ENCODE measurements at regions of chr9 and their contacts with region 1.

Region 1: DNA sequence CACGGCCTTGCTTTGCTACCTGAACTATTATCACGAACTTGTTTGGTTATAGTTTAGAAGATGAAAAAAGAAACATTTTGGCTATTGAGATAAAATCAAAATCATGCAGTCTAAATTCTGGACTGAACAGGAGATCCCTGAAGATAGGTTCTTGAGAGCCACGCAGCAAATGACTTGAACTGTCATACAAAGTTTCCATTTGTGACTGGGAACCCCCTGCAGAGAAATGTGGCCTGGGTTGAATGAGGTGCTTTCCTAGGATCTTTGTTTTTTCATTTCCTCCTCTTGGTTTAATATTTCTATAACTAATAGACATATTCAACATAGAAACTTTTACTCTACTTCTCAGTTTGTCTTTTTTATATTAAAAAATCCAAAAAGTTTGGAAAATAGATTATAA is 184.7 kb upstream of the TRPM3 start:
- DNase-seq: no peak
- ATAC-seq: no peak
- H3K4me3 Mint-ChIP-seq: no peak overlapping the region
- H3K27ac Mint-ChIP-seq: no peak overlapping the region
- H3K4me1 Mint-ChIP-seq: no peaks in the 10 kb centered on the region
- H3K27me3 Mint-ChIP-seq: peaks cover 4% of the 10 kb centered on the region

Region 2: GRCh38 chr9:71128796-71129195 is 177.3 kb before region 1 on chr9:
- CTCF ChIA-PET with region 1: no interaction called
- POLR2A ChIA-PET with region 1: no interaction called
- intact Hi-C with region 1: no loop called
- DNase-seq: no peak
- ATAC-seq: no peak
- H3K4me3 Mint-ChIP-seq: no peak overlapping the region
- H3K27ac Mint-ChIP-seq: no peak overlapping the region
- H3K4me1 Mint-ChIP-seq: no peaks in the 10 kb centered on the region
- H3K27me3 Mint-ChIP-seq: peaks cover under 1% of the 10 kb centered on the region

Region 3: DNA sequence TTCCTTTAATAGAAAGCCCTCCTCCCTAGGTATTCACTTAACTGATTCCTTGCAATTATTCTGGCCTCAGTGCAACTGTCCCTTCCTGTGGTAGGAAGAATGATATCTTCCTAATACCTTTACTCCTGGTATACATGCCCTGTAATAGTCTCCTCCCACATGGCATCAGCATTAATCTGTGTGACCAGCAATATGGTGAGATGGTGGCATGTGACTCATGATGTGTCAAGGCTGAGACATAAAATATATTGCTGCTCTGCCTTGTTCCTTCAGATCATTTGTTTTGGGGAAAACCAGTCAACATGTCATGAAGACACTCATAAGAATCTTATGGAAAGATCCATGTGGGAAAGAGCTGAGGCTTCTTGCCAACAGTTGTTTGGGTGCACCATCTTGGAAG is 35.6 kb before region 1 on chr9:
- CTCF ChIA-PET with region 1: no interaction called
- POLR2A ChIA-PET with region 1: no interaction called
- intact Hi-C with region 1: no loop called
- DNase-seq: no peak
- ATAC-seq: no peak
- H3K4me3 Mint-ChIP-seq: no peak overlapping the region
- H3K27ac Mint-ChIP-seq: no peak overlapping the region
- H3K4me1 Mint-ChIP-seq: no peaks in the 10 kb centered on the region
- H3K27me3 Mint-ChIP-seq: peaks cover 11% of the 10 kb centered on the region

Region 4: DNA sequence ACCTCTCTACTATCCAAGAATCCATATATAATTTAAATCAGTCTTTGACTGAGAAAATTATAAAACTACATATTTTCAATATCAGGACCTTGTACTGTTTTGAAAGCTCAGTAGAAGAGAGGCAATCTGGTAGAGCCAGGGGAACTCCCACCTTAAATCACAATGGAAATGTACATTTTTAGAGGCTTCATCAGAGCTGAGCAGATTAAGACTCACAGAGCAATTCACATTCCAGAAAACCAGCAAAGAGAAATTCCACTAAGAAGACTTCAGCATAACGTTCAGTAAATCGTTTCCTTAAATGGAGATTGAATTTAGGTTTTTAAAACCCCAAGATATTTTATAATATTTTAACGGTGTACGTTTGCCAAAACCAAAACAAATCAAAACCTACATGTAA is 43.1 kb after region 1 on chr9:
- CTCF ChIA-PET with region 1: no interaction called
- POLR2A ChIA-PET with region 1: no interaction called
- intact Hi-C with region 1: loop called in 1 of 2 experiments (anchors 5 kb)
- DNase-seq: no peak
- ATAC-seq: no peak
- H3K4me3 Mint-ChIP-seq: no peak overlapping the region
- H3K27ac Mint-ChIP-seq: no peak overlapping the region
- H3K4me1 Mint-ChIP-seq: no peaks in the 10 kb centered on the region
- H3K27me3 Mint-ChIP-seq: no peaks in the 10 kb centered on the region

Measured in activated CD4-positive, alpha-beta T cell treated with anti-CD3 and anti-CD28 coated beads for 36 hours (primary cell).